Activated CD4-positive, alpha-beta T cell treated with anti-CD3 and anti-CD28 coated beads, Interleukin-2, amount 10 ng/mL, durations not matched to agents 24 days and 14 days (primary cell): ENCODE measurements at regions of chr15 and their contacts with region 1.

Region 1: DNA sequence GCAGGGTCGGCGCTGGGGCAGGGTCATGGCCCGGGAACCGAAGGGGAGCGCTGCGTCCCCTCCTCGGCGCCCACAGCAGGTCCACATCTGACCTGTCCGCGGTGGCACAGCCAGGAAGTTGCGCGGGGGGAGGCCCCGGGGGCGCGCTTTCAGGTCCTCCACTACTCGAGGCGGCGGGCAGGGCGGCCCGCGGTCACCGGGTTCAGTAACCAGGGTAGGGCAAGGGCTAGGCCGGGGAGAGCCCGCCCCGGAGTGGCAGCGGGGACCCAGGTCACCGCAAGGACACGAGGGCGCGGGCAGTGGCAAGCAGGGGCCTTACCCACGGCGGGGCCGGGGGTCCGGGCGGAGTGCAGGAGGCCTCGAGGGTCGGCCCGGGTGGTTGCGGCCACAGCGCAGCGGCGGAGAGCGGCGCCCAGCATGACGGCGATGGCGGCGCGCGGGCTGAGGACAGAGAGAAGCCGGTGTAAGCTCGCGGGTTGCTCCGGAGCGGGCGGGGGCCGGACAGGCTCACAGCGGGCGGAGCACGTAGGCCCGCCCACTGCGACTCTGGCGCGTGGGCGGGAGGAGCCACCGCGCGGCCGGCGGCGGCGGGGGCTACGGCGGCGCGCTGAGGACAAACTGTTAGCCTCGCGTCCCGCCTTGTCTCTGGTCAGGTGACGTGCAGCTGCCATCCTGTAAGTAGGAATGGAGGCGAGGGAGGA is at the start of gene COX5A:
- DNase-seq: peak; percentile 97
- H3K4me3 Mint-ChIP-seq: peak within 1 kb of the TSS; percentile 92
- H3K27ac Mint-ChIP-seq: peak within 1 kb of the TSS; percentile 88
- H3K4me1 Mint-ChIP-seq: peaks cover 23% of the 10 kb centered on the region
- H3K27me3 Mint-ChIP-seq: no peaks in the 10 kb centered on the region
- total RNA-seq, gene COX5A: 314 and 317 TPM in 2 replicates

Region 2: GRCh38 chr15:74615508-74616365 is 322.0 kb before region 1 on chr15 and contains the start of gene CLK3:
- intact Hi-C with region 1: loop called (anchors 10 kb)
- DNase-seq: peak; percentile 99
- H3K4me3 Mint-ChIP-seq: peak within 1 kb of the TSS; percentile 95
- H3K27ac Mint-ChIP-seq: peak within 1 kb of the TSS; percentile 97
- H3K4me1 Mint-ChIP-seq: peaks cover 41% of the 10 kb centered on the region
- H3K27me3 Mint-ChIP-seq: no peaks in the 10 kb centered on the region
- total RNA-seq, gene CLK3: 112 and 113 TPM in 2 replicates

Region 3: GRCh38 chr15:74787251-74788041 is 150.3 kb before region 1 on chr15:
- intact Hi-C with region 1: loop called (anchors 2 kb)
- DNase-seq: peak; percentile 97
- H3K4me3 Mint-ChIP-seq: peak overlapping the region; percentile 96
- H3K27ac Mint-ChIP-seq: peak overlapping the region; percentile 99
- H3K4me1 Mint-ChIP-seq: peaks cover 68% of the 10 kb centered on the region
- H3K27me3 Mint-ChIP-seq: no peaks in the 10 kb centered on the region

Region 4: GRCh38 chr15:74889883-74890664 is 47.7 kb before region 1 on chr15 and contains the start of gene MPI:
- intact Hi-C with region 1: loop called (anchors 1 kb)
- DNase-seq: peak; percentile 96
- H3K4me3 Mint-ChIP-seq: peak within 1 kb of the TSS; percentile 80
- H3K27ac Mint-ChIP-seq: peak within 1 kb of the TSS; percentile 84
- H3K4me1 Mint-ChIP-seq: peaks cover 39% of the 10 kb centered on the region
- H3K27me3 Mint-ChIP-seq: no peaks in the 10 kb centered on the region
- total RNA-seq, gene MPI: 63.9 and 64.4 TPM in 2 replicates

Region 5: GRCh38 chr15:74906446-74907162 is 31.1 kb before region 1 on chr15 and contains the start of gene FAM219B:
- intact Hi-C with region 1: loop called (anchors 1 kb)
- DNase-seq: peak; percentile 95
- H3K4me3 Mint-ChIP-seq: peak within 1 kb of the TSS; percentile 97
- H3K27ac Mint-ChIP-seq: peak within 1 kb of the TSS; percentile 93
- H3K4me1 Mint-ChIP-seq: peaks cover 35% of the 10 kb centered on the region
- H3K27me3 Mint-ChIP-seq: no peaks in the 10 kb centered on the region
- total RNA-seq, gene FAM219B: 68.0 and 82.0 TPM in 2 replicates

Region 6: GRCh38 chr15:75367913-75368688 is 430.4 kb after region 1 on chr15 and contains the start of gene MAN2C1:
- intact Hi-C with region 1: loop called (anchors 5 kb)
- DNase-seq: peak; percentile 98
- H3K4me3 Mint-ChIP-seq: peak within 1 kb of the TSS; percentile 91
- H3K27ac Mint-ChIP-seq: peak within 1 kb of the TSS; percentile 96
- H3K4me1 Mint-ChIP-seq: peaks cover 24% of the 10 kb centered on the region
- H3K27me3 Mint-ChIP-seq: no peaks in the 10 kb centered on the region
- total RNA-seq, gene MAN2C1: 232 and 255 TPM in 2 replicates